Natural killer cell (primary cell): ENCODE measurements at regions of chr2 and their contacts with region 1.

Region 1: GRCh38 chr2:151828143-151828889 is at the start of gene ARL5A:
- DNase-seq: peak; percentile 98
- ATAC-seq: peak; percentile 92 to 98 (median 93)
- H3K4me3 ChIP-seq: peak within 1 kb of the TSS; percentile 82
- H3K4me3 Mint-ChIP-seq: peak within 1 kb of the TSS; percentile 96
- H3K27ac ChIP-seq: peak within 1 kb of the TSS; percentile 78
- H3K27ac Mint-ChIP-seq: peak within 1 kb of the TSS; percentile 95 to 96
- H3K4me1 ChIP-seq: peaks cover 15% of the 10 kb centered on the region
- H3K4me1 Mint-ChIP-seq: peaks cover 52 to 54% of the 10 kb centered on the region in 2 donors
- H3K27me3 ChIP-seq: no peaks in the 10 kb centered on the region
- H3K27me3 Mint-ChIP-seq: no peaks in the 10 kb centered on the region
- CTCF ChIP-seq: no peak
- total RNA-seq, gene ARL5A: 39.9 to 58.0 (median 56.5) TPM

Region 2: GRCh38 chr2:151638191-151638933 is 190.0 kb before region 1 on chr2:
- intact Hi-C with region 1: loop called (anchors 5 kb)
- DNase-seq: peak; percentile 21 to 63
- ATAC-seq: peak; percentile 52 to 65 (median 56)
- H3K4me3 ChIP-seq: no peak overlapping the region
- H3K4me3 Mint-ChIP-seq: peak overlapping the region; percentile 83
- H3K27ac ChIP-seq: peak overlapping the region; percentile 84
- H3K27ac Mint-ChIP-seq: peak overlapping the region; percentile 92 to 93
- H3K4me1 ChIP-seq: peaks cover 33% of the 10 kb centered on the region
- H3K4me1 Mint-ChIP-seq: peaks cover 49 to 53% of the 10 kb centered on the region in 2 donors
- H3K27me3 ChIP-seq: no peaks in the 10 kb centered on the region
- H3K27me3 Mint-ChIP-seq: no peaks in the 10 kb centered on the region
- CTCF ChIP-seq: no peak

Region 3: GRCh38 chr2:151805961-151806360 is 22.4 kb before region 1 on chr2:
- intact Hi-C with region 1: no loop called
- DNase-seq: no peak
- ATAC-seq: peak in 1 of 3 donors; percentile 71
- H3K4me3 ChIP-seq: no peak overlapping the region
- H3K4me3 Mint-ChIP-seq: no peak overlapping the region
- H3K27ac ChIP-seq: no peak overlapping the region
- H3K27ac Mint-ChIP-seq: no peak overlapping the region
- H3K4me1 ChIP-seq: peaks cover 4% of the 10 kb centered on the region
- H3K4me1 Mint-ChIP-seq: no peaks in the 10 kb centered on the region
- H3K27me3 ChIP-seq: no peaks in the 10 kb centered on the region
- H3K27me3 Mint-ChIP-seq: no peaks in the 10 kb centered on the region
- CTCF ChIP-seq: no peak

Region 4: DNA sequence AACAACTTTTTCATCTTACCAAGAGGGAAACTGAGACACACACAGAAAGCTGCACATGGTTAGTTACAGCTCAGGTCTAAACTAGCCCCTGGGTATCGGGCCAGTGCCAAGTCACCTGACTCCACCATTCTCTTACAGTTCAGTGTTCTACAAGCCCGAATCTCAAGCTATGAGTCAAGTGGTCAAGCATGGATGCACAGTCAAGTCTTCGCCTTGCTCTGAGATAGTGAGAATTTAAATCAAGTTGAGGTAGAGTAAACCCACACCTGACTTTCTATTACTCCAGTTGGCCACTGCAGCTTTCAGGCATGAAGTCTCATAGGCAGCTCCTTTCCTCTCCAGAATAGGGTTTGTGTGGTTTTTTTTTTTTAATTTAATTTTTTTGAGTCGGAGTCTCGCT is 34.4 kb after region 1 on chr2:
- intact Hi-C with region 1: no loop called
- DNase-seq: no peak
- ATAC-seq: no peak
- H3K4me3 ChIP-seq: no peak overlapping the region
- H3K4me3 Mint-ChIP-seq: no peak overlapping the region
- H3K27ac ChIP-seq: no peak overlapping the region
- H3K27ac Mint-ChIP-seq: no peak overlapping the region
- H3K4me1 ChIP-seq: no peaks in the 10 kb centered on the region
- H3K4me1 Mint-ChIP-seq: no peaks in the 10 kb centered on the region
- H3K27me3 ChIP-seq: no peaks in the 10 kb centered on the region
- H3K27me3 Mint-ChIP-seq: peaks cover 9 to 16% of the 10 kb centered on the region in 2 donors
- CTCF ChIP-seq: no peak